Posterior vena cava (tissue), 2 donors: ENCODE measurements at regions of chr9 and their contacts with region 1.

Region 1: DNA sequence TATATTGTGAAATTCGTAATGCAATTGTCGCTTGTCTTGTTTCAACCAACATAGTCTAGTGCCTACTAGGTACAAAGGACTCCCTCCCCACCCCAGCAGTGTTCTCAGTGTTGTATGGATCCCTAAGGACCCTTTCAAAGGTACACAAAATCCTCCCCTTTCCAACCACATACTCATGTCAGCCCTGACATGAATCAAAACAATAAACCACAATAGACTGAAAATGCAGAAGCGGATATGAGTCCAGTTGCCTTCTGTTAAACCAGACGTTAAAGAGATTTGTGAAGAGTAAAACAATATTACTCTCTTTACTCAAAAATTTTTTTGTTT is 82.4 kb upstream of the IFNK start:
- DNase-seq: no peak

Region 2: DNA sequence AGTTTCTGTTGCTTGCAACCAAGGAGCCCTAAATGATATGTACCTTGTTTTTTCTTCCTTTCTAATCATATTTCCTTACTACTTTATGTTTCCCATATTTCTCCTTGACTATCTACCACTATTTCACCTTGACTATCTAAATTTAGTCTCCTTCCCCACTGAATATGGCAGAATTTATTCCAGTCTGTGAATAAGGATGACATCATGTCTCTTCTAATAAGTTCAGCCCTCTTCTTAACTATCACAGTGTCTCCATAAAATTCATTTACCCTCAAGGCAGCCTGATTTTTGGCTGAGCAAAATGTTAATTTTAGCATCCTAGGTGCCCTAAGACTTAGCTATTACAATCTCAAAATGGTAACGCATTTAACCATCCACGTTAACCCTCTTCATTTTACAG is 45.2 kb before region 1 on chr9:
- intact Hi-C with region 1: loop called in 1 of 2 experiments (anchors 2 kb)
- DNase-seq: no peak